ENCODE measurements at regions of chr14 and their contacts with region 1.

Region 1: DNA sequence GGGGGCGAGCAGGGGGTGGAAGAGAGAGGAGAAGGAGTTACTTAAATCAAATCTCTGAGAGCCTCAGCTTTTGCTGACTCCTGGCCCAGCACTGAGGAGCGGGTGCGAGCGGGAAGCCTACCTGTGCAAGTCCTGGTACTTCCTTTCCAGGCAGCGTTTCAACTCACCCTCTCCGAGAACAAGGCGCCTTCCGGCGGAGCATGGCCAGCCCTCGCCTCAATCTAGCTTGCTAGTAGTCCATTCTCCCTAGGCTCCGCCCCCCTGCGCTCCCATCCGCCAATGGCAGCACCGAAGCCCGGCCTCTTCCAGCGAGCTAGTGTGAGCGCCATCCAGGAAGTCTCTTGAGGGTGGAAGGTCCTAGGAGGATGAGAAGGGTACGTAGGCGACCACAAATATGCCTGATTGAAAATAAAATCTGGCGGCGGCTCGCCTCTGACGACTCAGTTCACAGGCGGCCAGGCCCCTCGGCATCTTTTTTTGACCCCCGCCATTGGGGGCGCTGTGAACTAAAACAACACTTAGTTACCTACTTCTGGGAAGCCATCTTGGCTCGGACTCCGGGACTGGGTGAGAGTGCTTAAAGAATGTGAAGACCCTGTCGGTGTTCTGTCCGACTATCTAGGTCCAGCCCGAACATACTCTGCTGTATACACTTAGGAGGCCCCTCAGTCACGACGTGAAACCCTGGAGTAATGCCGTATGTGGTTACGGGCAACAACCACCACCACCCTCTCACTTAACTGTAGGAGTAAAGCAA is at the start of gene CHD8:
- H3K4me3 ChIP-seq: peak within 1 kb of the TSS; percentile 94
- H3K27ac ChIP-seq: peak within 1 kb of the TSS; percentile 96
- H3K4me1 ChIP-seq: peaks cover 6% of the 10 kb centered on the region; the same call in 1 of the 2 replicates
- CTCF ChIP-seq: peak; percentile 54; the same call in 1 of the 2 replicates

Region 2: GRCh38 chr14:21383848-21384493 is 72.1 kb before region 1 on chr14 and contains the start of gene SUPT16H:
- CTCF ChIA-PET with region 1: no interaction called
- POLR2A ChIA-PET with region 1: interaction called, 12 read pairs
- H3K4me3 ChIP-seq: peak within 1 kb of the TSS; percentile 89
- H3K27ac ChIP-seq: peak within 1 kb of the TSS; percentile 87
- H3K4me1 ChIP-seq: peaks cover 20% of the 10 kb centered on the region
- CTCF ChIP-seq: no peak

Region 3: GRCh38 chr14:21408147-21408546 is 47.9 kb before region 1 on chr14:
- CTCF ChIA-PET with region 1: no interaction called
- POLR2A ChIA-PET with region 1: no interaction called
- H3K4me3 ChIP-seq: no peak overlapping the region
- H3K27ac ChIP-seq: no peak overlapping the region
- H3K4me1 ChIP-seq: no peaks in the 10 kb centered on the region
- CTCF ChIP-seq: no peak

Region 4: GRCh38 chr14:21437063-21437901 is 18.8 kb before region 1 on chr14:
- CTCF ChIA-PET with region 1: interaction called, 16 read pairs
- POLR2A ChIA-PET with region 1: interaction called, 70 read pairs
- H3K4me3 ChIP-seq: peak overlapping the region; percentile 97
- H3K27ac ChIP-seq: peak overlapping the region; percentile 90
- H3K4me1 ChIP-seq: peaks cover 6% of the 10 kb centered on the region; the same call in 1 of the 2 replicates
- CTCF ChIP-seq: no peak

Region 5: GRCh38 chr14:21476925-21477681 is 21.0 kb after region 1 on chr14 and contains the starts of genes RAB2B and TOX4:
- CTCF ChIA-PET with region 1: interaction called, 5 read pairs
- POLR2A ChIA-PET with region 1: interaction called, 20 read pairs
- H3K4me3 ChIP-seq: peak within 1 kb of the TSS; percentile 97
- H3K27ac ChIP-seq: peak within 1 kb of the TSS; percentile 43
- H3K4me1 ChIP-seq: no peaks in the 10 kb centered on the region
- CTCF ChIP-seq: peak; percentile 98

Region 6: DNA sequence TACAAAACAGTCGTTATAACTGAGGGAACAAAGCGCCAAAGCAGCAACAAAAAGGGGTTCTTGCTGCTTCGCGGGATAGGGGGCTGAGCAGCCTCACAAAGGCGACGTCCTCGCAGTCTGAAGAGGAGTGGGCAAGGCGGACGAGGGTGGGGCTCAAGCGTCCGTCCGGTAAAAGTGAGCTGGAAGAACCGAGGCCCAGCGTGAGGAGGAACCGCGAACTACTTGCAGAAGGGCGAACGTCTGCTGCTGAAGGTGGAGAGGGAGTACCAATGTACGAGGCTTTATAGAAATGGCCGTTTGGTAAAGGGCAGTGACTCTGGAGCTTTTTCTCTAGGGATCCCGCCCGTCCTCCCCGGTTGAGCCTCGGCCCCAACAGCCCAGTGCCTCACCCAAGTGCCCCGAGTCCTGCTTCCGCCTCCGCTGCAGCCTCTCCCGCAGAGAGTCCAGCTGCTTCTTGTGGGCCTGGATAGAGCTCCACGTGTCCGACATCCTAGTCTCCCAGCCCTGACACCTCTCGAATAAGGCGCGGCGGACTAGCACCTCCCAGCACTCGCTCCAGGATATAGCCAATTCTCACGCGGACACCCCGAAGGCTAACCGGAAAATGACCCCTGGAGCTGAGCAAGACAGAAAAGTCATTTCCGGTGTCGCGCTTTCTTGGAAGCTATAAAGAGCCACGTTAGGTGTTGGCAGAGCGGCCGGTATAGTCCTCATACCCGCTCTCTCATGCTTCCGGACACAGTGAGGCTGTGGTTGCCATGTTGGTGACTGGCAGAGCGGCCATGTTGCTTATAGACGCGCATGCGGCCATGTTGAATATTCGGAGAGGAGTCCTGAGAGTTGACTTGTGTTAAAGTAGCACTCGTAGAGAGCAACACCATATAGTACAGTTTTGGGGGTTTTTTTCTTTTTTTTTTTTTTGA is 54.9 kb after region 1 on chr14 and contains the start of gene METTL3:
- CTCF ChIA-PET with region 1: interaction called, 10 read pairs
- POLR2A ChIA-PET with region 1: interaction called, 11 read pairs
- H3K4me3 ChIP-seq: peak within 1 kb of the TSS; percentile 77
- H3K27ac ChIP-seq: peak within 1 kb of the TSS; percentile 72
- H3K4me1 ChIP-seq: 0 out of 2 replicates have a peak, but pooled peaks cover 4% of the 10 kb centered on the region
- CTCF ChIP-seq: peak; percentile 26; the same call in 1 of the 2 replicates

Region 7: DNA sequence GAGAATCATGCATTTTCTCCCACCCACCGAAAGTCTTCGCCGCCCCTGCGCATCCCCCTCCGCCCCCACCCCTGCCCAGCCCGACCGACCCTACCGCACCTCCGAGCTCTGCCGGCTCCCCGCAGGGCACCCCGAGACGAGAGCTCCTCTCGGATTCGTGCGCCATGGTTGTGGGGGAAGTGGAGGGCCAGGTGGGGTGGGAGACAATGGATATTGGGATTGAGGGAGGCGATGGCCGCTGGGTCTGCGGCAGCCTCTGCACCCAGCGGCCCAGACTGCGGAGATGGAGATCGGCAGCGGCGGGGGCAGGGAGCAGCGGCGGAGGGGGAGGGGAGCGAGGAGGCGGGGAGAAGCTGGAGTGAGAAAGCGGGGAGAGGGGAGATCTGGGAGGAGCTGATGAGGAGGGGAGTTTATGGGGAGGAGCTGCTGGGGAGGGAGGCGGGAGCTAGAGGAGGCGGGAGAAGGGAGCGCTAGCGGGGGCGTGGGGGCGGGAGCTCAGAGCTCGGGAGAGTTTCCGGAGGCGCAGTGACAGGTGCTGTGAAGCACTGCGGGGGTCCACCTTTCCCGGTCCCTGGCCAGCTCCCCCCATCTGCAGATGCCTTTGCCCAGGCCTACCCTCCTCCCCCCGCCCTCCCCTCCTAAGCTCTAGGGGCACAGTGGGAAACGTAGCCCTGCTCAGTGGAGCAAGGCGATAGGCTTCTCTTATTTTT is 70.0 kb after region 1 on chr14 and contains the start of gene SALL2:
- CTCF ChIA-PET with region 1: interaction called, 5 read pairs
- POLR2A ChIA-PET with region 1: interaction called, 11 read pairs
- H3K4me3 ChIP-seq: peak within 1 kb of the TSS; percentile 81
- H3K27ac ChIP-seq: peak within 1 kb of the TSS; percentile 66
- H3K4me1 ChIP-seq: peaks cover 17% of the 10 kb centered on the region
- CTCF ChIP-seq: no peak